Natural killer cell (primary cell): ENCODE measurements at regions of chr17 and their contacts with region 1.

Region 1: GRCh38 chr17:43033948-43034881 is 9.2 kb downstream of the RND2 start:
- DNase-seq: no peak
- ATAC-seq: no peak
- H3K4me3 ChIP-seq: no peak overlapping the region
- H3K4me3 Mint-ChIP-seq: no peak overlapping the region
- H3K27ac ChIP-seq: no peak overlapping the region
- H3K27ac Mint-ChIP-seq: no peak overlapping the region
- H3K4me1 ChIP-seq: no peaks in the 10 kb centered on the region
- H3K4me1 Mint-ChIP-seq: no peaks in the 10 kb centered on the region
- H3K27me3 ChIP-seq: no peaks in the 10 kb centered on the region
- H3K27me3 Mint-ChIP-seq: no peaks in the 10 kb centered on the region
- CTCF ChIP-seq: no peak

Region 2: DNA sequence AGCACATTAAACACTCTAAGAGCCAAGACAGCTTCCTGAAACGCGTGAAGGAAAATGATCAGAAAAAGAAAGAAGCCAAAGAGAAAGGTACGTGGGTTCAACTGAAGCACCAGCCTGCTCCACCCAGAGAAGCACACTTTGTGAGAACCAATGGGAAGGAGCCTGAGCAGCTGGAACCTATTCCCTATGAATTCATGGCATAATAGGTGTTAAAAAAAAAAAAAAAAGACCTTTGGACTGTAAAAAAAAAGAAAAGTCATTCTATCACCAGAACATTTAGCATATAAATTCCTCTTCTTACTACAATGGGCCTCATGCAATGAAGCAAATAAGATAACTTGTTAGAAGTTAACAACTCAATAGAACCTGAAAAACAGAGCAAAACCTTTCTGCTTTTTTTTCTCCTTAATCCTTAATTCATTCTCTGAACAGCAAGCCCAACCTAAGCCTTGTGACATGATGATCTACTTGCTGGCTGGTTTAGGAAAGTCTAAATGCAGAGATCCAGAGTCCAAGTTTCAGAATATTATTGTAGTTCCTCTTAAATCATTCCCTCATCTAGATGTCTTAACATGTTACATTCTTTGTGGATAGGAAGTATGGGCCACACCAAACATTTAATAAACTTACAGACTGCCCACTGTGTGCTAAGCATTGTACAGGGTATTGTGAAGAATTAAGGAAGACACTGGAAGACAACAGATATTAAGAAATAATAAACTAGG is 45.5 kb after region 1 on chr17:
- intact Hi-C with region 1: loop called (anchors 5 kb)
- DNase-seq: no peak
- ATAC-seq: no peak
- H3K4me3 ChIP-seq: no peak overlapping the region
- H3K4me3 Mint-ChIP-seq: no peak overlapping the region
- H3K27ac ChIP-seq: no peak overlapping the region
- H3K27ac Mint-ChIP-seq: no peak overlapping the region
- H3K4me1 ChIP-seq: no peaks in the 10 kb centered on the region
- H3K4me1 Mint-ChIP-seq: no peaks in the 10 kb centered on the region
- H3K27me3 ChIP-seq: no peaks in the 10 kb centered on the region
- H3K27me3 Mint-ChIP-seq: no peaks in the 10 kb centered on the region
- CTCF ChIP-seq: no peak